SK-N-SH (cell line): ENCODE measurements at regions of chr20 and their contacts with region 1.

Region 1: GRCh38 chr20:31861346-31862156 is 8.8 kb downstream of the DUSP15 start:
- DNase-seq: peak; percentile 99
- H3K4me3 ChIP-seq: peak overlapping the region; percentile 62 to 63
- H3K27ac ChIP-seq: peak overlapping the region in 1 of 2 experiments; percentile 82; a peak in 2 of 4 replicates
- H3K4me1 ChIP-seq: peaks cover 0 to 21% of the 10 kb centered on the region in 2 experiments; a peak in 2 of 4 replicates
- H3K27me3 ChIP-seq: no peaks in the 10 kb centered on the region
- CTCF ChIP-seq: no peak
- EP300 ChIP-seq: no peak
- RAD21 ChIP-seq: no peak

Region 2: DNA sequence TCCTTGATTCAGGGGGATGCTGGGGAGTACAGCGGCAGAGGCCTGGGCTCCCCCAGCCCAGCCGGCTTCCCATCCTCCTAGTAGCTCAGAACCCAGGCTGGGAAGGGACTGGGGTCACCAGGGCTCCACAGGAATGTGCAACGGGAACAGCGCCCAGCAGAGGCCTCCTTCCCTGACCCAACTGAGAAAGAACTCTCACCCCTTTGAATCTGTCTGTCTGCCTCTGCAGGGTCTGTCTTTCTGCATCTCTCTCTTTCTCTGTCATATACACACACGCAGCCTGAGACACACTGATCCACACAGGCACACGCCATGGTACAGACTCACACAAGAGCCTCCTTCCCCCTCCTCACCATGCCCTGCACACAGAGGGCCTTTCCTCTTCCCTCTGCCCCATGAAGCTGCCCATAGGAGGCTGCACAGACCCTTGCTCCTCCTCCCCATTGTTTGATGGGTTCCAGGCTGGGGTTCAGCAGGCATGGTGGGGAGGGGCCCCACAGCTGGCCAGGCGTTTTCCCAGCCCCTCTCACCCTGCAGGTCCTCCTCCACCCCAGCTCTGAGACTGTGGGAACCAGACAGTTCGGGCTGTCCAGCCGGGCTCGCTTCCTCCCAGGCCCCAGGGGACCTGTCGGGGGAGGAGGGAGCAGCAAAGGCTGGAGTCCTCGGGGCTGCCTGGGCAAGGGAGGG is 18.9 kb before region 1 on chr20:
- CTCF ChIA-PET with region 1: interaction called, 29 read pairs
- POLR2A ChIA-PET with region 1: no interaction called
- DNase-seq: peak; percentile 58
- H3K4me3 ChIP-seq: no peak overlapping the region; a peak in 1 of 4 replicates
- H3K27ac ChIP-seq: peak overlapping the region; percentile 71 to 76
- H3K4me1 ChIP-seq: peaks cover 37 to 42% of the 10 kb centered on the region in 2 experiments
- H3K27me3 ChIP-seq: no peaks in the 10 kb centered on the region
- CTCF ChIP-seq: no peak
- EP300 ChIP-seq: no peak
- RAD21 ChIP-seq: no peak